ENCODE measurements at regions of chr12 and their contacts with region 1.

Region 1: DNA sequence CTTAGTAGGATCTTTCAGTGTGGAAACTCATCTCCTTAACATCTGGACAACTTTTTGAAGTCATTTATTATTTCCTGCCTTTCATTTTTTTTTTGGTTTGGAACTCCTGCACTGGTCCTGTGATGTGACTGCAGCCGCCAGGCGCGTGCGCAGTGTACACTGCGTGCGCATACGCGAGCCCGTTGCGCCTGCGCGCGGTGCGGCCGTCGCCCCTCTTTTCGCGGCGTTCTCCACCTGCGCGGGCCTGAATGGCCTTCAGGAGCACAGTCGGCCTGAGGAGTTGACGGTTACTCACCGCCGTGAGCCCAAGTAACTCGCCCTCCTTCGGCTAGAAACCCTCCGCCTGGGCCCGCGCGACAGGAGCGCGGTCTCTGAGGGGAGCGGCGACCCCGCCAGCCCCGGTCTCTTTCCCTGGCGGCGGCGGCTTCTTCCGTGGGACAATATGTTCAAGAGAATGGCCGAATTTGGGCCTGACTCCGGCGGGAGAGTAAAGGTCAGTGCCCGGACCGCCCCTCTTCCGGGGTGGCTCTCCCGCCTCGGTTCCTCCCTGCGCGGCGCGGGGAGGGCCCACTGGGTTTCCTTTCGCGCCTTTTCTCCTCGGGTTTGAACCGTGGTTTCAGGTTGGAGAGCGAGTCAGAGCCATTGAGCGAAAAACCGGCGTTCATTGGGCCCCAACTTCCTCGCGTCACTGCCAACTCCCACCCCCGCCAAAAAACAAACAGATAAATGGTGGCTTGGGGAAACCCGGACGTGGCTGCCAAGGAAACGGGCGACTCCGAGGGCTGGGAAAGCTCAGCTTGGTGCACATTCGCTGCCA is at the start of gene YEATS4:
- DNase-seq: peak; percentile 88
- ATAC-seq: peak; percentile 96
- H3K4me3 ChIP-seq: peak within 1 kb of the TSS; percentile 73
- H3K27ac ChIP-seq: peak within 1 kb of the TSS; percentile 55
- H3K4me1 ChIP-seq: no peaks in the 10 kb centered on the region
- H3K27me3 ChIP-seq: 0 out of 2 replicates have a peak, but pooled peaks cover 2% of the 10 kb centered on the region
- CTCF ChIP-seq: no peak
- POLR2A ChIP-seq: peak; percentile 70; the same call in 1 of the 2 replicates
- RAD21 ChIP-seq: no peak
- total RNA-seq, gene YEATS4: 15.1 and 17.8 TPM in 2 replicates

Region 2: GRCh38 chr12:69157023-69157655 is 202.6 kb before region 1 on chr12:
- CTCF ChIA-PET with region 1: no interaction called
- POLR2A ChIA-PET with region 1: no interaction called
- dilution Hi-C with region 1: no loop called
- in situ Hi-C with region 1: no loop called
- intact Hi-C with region 1: loop called (anchors 1 kb)
- DNase-seq: peak; percentile 76
- ATAC-seq: peak; percentile 98
- H3K4me3 ChIP-seq: no peak overlapping the region
- H3K27ac ChIP-seq: no peak overlapping the region
- H3K4me1 ChIP-seq: no peaks in the 10 kb centered on the region; the same call in 1 of the 2 replicates
- H3K27me3 ChIP-seq: no peaks in the 10 kb centered on the region
- CTCF ChIP-seq: peak; percentile 91
- POLR2A ChIP-seq: no peak
- RAD21 ChIP-seq: peak; percentile 70

Region 3: DNA sequence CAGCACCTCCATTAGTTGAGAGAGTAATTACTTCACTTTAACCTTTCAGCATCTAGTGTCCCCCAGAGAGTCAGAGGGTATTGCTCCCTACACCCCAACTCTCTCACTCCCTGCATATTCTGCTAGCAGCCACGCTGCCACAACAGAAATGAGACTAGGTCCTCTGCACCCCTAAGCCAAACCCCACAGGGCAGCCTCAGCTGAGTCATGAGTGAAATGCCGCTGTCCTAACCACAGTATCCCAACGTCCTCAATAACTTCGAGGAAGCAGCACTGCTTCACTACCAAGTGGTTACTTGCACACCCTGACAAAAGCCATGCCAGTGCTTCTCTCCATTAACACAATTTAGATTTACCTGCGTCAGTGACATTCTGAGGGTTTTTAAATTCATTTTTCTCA is 18.4 kb before region 1 on chr12:
- CTCF ChIA-PET with region 1: no interaction called
- POLR2A ChIA-PET with region 1: no interaction called
- dilution Hi-C with region 1: no loop called
- in situ Hi-C with region 1: no loop called
- intact Hi-C with region 1: no loop called
- DNase-seq: no peak
- ATAC-seq: no peak
- H3K4me3 ChIP-seq: no peak overlapping the region
- H3K27ac ChIP-seq: no peak overlapping the region
- H3K4me1 ChIP-seq: no peaks in the 10 kb centered on the region
- H3K27me3 ChIP-seq: peaks cover 32% of the 10 kb centered on the region
- CTCF ChIP-seq: no peak
- POLR2A ChIP-seq: no peak
- RAD21 ChIP-seq: no peak

Region 4: GRCh38 chr12:69570545-69571399 is 211.0 kb after region 1 on chr12:
- CTCF ChIA-PET with region 1: no interaction called
- POLR2A ChIA-PET with region 1: no interaction called
- dilution Hi-C with region 1: no loop called
- in situ Hi-C with region 1: no loop called
- intact Hi-C with region 1: loop called (anchors 1 kb)
- DNase-seq: peak; percentile 69
- ATAC-seq: peak; percentile 74; the same call in 1 of the 2 replicates
- H3K4me3 ChIP-seq: no peak overlapping the region
- H3K27ac ChIP-seq: no peak overlapping the region
- H3K4me1 ChIP-seq: peaks cover 4% of the 10 kb centered on the region; the same call in 1 of the 2 replicates
- H3K27me3 ChIP-seq: no peaks in the 10 kb centered on the region
- CTCF ChIP-seq: peak; percentile 77
- POLR2A ChIP-seq: no peak
- RAD21 ChIP-seq: peak; percentile 82

Region 5: DNA sequence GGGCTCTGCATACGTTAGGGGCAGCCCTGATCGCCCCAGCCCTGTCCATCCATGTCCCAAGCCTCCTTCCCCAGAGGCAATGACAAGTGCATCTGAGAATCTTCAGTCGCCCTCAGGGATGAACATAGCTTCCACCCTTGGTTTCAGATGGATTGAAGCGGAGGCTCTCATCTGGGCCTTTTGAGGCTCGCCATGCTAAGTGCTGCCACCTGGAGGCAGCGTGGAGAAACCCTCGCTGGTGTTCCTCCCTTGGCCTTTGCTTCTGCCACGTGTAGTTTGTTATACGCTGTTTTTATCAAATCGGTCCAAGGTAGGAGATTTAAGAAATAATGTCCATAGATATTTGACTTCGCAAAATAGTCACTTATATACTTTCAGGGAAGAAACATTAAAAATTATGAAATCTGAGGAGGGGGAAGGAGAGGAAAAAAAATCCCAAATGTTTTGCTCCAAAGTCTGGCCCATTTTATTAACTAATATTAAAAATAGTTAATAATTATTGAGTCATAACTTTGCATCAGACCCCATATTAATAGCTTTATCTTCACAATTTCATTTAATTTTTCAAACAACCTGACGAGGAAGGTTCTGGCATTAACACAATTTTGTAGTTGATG is 279.8 kb after region 1 on chr12:
- CTCF ChIA-PET with region 1: interaction called, 3 read pairs
- POLR2A ChIA-PET with region 1: no interaction called
- dilution Hi-C with region 1: no loop called
- in situ Hi-C with region 1: no loop called
- intact Hi-C with region 1: loop called (anchors 1 kb)
- DNase-seq: peak; percentile 67
- ATAC-seq: peak; percentile 99
- H3K4me3 ChIP-seq: no peak overlapping the region
- H3K27ac ChIP-seq: no peak overlapping the region
- H3K4me1 ChIP-seq: no peaks in the 10 kb centered on the region
- H3K27me3 ChIP-seq: peaks cover 3% of the 10 kb centered on the region; the same call in 1 of the 2 replicates
- CTCF ChIP-seq: peak; percentile 86
- POLR2A ChIP-seq: no peak
- RAD21 ChIP-seq: peak; percentile 74

Region 6: DNA sequence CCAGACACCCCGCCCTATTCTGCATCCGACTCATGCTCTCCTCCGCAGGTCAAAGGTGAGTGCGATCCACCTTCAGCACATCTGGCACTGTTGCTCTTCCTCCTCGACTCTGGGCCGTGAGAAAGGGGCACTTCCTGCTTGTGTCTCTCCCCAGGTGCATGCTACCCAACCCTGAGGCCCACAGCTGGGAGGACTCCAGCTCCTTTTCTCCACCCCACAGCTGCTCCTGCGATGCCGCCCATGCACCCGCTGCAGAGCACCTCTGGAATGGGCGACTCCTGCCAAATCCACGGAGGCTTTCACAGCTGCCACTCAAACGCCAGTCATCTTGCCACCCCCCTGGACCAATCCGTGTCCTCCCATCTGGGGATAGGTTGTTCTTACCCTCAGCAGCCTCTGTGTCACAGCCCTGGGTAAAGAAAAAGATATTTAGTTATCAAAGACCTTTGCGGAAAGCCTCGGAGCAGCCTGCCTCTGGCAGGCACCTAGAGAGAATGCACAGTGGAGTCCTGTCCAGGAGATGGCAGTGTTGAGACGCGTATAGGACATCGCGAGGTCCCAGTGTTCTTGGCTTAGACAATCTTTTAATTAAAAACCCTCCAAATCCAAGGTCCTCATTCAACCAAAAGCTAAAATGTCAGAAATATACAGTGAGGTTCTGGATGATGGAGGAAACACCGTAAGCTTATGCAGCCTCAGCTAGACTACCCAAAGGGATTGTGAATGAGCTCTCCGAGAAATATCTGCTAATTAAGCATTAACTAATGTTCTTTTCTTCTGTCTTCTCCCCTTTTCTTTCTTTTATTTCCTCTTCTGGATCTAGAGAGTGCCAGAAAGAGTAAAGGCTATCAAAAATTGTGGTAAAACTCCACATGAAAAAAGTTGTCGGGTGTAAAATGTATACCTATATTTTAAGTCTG is 519.6 kb after region 1 on chr12:
- CTCF ChIA-PET with region 1: no interaction called
- POLR2A ChIA-PET with region 1: no interaction called
- dilution Hi-C with region 1: no loop called
- in situ Hi-C with region 1: no loop called
- intact Hi-C with region 1: loop called (anchors 2 kb)
- DNase-seq: peak; percentile 69
- ATAC-seq: peak; percentile 97
- H3K4me3 ChIP-seq: no peak overlapping the region
- H3K27ac ChIP-seq: no peak overlapping the region
- H3K4me1 ChIP-seq: no peaks in the 10 kb centered on the region
- H3K27me3 ChIP-seq: peaks cover 7% of the 10 kb centered on the region; the same call in 1 of the 2 replicates
- CTCF ChIP-seq: peak; percentile 93
- POLR2A ChIP-seq: no peak
- RAD21 ChIP-seq: peak; percentile 96

Region 7: GRCh38 chr12:70487440-70487839 is 1127.7 kb after region 1 on chr12:
- CTCF ChIA-PET with region 1: no interaction called
- POLR2A ChIA-PET with region 1: no interaction called
- dilution Hi-C with region 1: no loop called
- in situ Hi-C with region 1: no loop called
- intact Hi-C with region 1: no loop called
- DNase-seq: no peak
- ATAC-seq: no peak
- H3K4me3 ChIP-seq: no peak overlapping the region
- H3K27ac ChIP-seq: no peak overlapping the region
- H3K4me1 ChIP-seq: no peaks in the 10 kb centered on the region
- H3K27me3 ChIP-seq: no peaks in the 10 kb centered on the region
- CTCF ChIP-seq: no peak
- POLR2A ChIP-seq: no peak
- RAD21 ChIP-seq: no peak